Right ventricle myocardium inferior (tissue), 1 donor: ENCODE measurements at regions of chr3 and their contacts with region 1.

Region 1: GRCh38 chr3:19717736-19718135 is 216.3 kb downstream of the EFHB start:
- DNase-seq: no peak
- ATAC-seq: no peak

Region 2: GRCh38 chr3:19808834-19809233 is 91.1 kb after region 1 on chr3:
- intact Hi-C with region 1: loop called (anchors 2 kb)
- DNase-seq: no peak
- ATAC-seq: no peak